Sciatic nerve (tissue), 2 donors: ENCODE measurements at regions of chr5 and their contacts with region 1.

Region 1: GRCh38 chr5:130126746-130127145 is 222.5 kb downstream of the CHSY3 start:
- DNase-seq: no peak
- ATAC-seq: no peak

Region 2: DNA sequence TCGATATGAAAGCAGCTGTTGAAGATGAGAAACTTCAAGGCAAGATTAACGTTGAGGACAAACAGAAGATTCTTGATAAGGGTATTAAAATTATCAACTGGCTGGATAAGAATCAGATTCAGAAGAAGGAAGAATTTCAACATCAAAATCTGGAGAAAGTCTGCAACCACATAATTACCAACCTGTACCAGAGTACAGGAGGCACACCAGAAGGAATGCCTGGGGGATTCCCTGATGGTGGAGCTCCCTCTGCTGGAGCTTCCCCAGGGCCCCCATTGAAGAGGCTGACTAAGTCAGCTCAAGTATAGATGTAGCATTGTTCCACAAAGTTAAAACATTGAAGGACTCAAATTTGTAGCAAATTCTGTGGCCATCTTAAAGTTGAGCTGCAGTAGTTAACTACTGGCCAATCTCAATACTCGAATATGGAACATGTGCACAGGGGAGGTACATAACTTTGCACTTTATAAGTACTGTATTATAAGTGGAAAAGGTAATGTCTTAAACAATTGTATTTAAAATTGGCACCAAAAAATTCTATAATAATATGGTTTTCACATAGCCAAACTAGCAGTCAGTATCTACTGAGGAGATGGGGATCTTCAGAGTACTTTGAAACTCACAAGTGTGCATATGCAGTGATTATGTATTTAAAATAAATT is 15.0 kb after region 1 on chr5:
- intact Hi-C with region 1: no loop called
- DNase-seq: no peak
- ATAC-seq: no peak

Region 3: DNA sequence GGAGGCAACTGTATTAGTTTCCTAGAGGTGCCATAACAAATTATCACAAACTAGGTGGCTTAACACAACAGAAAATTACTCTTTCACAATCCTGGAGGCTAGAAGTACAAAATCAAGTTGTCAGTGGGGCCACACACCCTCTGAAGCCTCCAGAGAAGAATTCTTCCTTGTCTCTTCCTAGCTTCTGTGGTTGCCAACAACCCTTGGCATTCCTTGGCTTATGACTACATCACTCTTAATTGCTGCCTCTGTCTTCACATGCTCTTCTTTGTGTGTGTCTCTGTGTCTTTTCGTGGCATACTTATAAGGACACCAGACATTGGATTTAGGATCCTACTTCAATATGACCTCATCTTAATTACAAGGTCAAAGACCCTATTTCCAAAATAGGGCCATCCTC is 105.0 kb after region 1 on chr5:
- intact Hi-C with region 1: loop called (anchors 2 kb)
- DNase-seq: no peak
- ATAC-seq: no peak